ENCODE measurements at regions of chr12 and their contacts with region 1.

Region 1: DNA sequence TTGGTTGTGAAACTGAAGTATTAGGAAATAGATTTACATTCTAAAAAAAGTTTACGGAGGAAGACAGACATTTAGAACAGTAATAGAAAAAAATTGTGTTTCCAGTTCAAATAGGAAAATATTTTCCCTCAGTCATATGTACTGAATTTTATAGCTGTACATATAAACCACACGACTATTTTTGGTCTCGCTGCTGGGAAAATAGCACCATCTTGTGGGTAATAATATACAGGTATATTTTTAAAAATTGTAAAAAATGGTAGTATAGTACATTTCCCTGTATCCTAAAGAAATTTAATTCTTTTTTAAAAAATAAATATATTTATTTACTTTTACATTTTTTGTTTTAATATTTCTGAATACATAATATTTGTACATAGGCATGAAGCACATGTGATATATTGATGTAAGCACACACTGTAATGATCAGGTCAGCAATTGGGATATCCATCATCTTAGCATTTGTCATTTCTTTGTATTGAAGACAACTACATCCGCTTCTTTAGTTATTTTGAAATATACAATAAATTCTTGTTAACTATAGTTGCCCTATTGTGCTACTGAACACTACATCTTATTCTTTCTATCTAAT is 168.6 kb downstream of the ALX1 start:
- DNase-seq: peak; percentile 64
- H3K4me3 ChIP-seq: no peak overlapping the region
- H3K27ac ChIP-seq: no peak overlapping the region
- H3K4me1 ChIP-seq: peaks cover 25% of the 10 kb centered on the region
- H3K27me3 ChIP-seq: no peaks in the 10 kb centered on the region
- CTCF ChIP-seq: peak; percentile 69; the same call in 1 of the 2 replicates

Region 2: GRCh38 chr12:84874125-84874824 is 574.4 kb before region 1 on chr12:
- CTCF ChIA-PET with region 1: no interaction called
- POLR2A ChIA-PET with region 1: no interaction called
- intact Hi-C with region 1: loop called (anchors 10 kb)
- DNase-seq: peak; percentile 68
- H3K4me3 ChIP-seq: no peak overlapping the region
- H3K27ac ChIP-seq: no peak overlapping the region
- H3K4me1 ChIP-seq: no peaks in the 10 kb centered on the region
- H3K27me3 ChIP-seq: no peaks in the 10 kb centered on the region
- CTCF ChIP-seq: peak; percentile 80

Region 3: DNA sequence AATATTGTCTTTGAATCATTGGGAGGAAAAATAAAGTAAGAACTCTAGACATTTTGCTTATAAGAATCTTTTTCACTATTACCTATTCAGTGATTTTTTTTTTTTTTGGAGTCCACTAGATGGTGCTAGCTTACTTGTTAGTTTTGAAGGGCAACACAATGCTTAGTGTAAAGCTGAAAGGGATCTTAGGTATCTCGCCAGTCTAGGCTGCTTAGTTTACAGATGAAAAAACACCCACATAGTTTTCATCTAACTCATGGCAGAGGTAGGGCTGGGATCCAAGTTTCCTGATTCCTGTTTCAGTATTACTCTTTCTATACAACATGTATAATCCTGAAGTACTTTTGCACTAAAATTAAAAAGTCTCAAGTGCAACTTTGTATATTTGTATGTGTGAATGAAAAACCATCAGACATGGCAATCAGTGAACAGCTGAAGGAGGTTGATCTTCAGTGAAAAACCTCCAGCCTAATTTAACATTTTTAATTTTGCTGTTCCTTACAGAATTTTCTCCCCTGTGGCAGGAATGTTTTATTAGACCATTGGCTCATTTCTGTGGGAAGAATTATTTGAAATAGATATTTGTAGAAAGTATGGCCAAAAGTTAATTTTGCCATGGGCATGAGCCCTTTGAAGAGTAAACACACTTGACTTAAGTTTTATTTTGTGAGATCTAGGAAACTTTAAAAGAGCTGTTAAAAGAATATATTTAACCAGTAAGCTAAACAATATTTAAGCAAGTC is 371.8 kb before region 1 on chr12:
- CTCF ChIA-PET with region 1: interaction called, 7 read pairs
- POLR2A ChIA-PET with region 1: no interaction called
- intact Hi-C with region 1: loop called (anchors 1 kb)
- DNase-seq: peak; percentile 80
- H3K4me3 ChIP-seq: no peak overlapping the region
- H3K27ac ChIP-seq: no peak overlapping the region
- H3K4me1 ChIP-seq: no peaks in the 10 kb centered on the region
- H3K27me3 ChIP-seq: no peaks in the 10 kb centered on the region
- CTCF ChIP-seq: peak; percentile 68

Region 4: DNA sequence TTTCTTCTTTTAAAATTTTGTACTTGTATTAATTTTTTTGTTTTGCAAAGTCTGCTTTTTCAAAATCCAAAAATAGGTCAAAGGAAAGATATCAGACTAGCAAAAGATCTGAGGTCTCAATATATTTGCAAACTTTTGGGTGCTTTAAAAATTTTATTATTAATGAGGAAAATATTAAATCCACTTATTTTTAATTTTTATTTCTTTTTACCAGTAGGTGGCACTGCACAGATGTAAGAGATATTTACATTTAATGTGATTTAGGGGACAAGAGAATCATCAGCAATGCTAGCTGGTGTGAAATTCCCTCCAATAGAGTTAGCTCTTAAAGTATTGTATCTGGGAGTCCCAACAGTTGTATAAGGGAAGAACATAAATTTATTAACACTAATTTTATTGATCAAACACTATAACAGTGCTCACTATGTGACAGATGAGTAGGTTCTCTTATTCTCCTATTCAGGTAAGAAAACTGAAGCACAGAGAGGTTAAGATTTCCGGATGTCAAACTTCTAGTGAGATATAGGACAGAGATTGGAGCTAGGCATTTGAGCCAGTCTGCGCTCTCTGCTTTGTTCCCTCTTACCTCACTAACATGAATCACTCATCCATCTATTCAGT is 138.1 kb before region 1 on chr12:
- CTCF ChIA-PET with region 1: no interaction called
- POLR2A ChIA-PET with region 1: no interaction called
- intact Hi-C with region 1: loop called (anchors 5 kb)
- DNase-seq: peak; percentile 60
- H3K4me3 ChIP-seq: no peak overlapping the region
- H3K27ac ChIP-seq: peak overlapping the region; percentile 6
- H3K4me1 ChIP-seq: peaks cover 24% of the 10 kb centered on the region
- H3K27me3 ChIP-seq: no peaks in the 10 kb centered on the region
- CTCF ChIP-seq: peak; percentile 67

Region 5: GRCh38 chr12:85356596-85357385 is 91.9 kb before region 1 on chr12:
- CTCF ChIA-PET with region 1: no interaction called
- POLR2A ChIA-PET with region 1: no interaction called
- intact Hi-C with region 1: loop called (anchors 5 kb)
- DNase-seq: peak; percentile 89
- H3K4me3 ChIP-seq: no peak overlapping the region
- H3K27ac ChIP-seq: peak overlapping the region; percentile 81
- H3K4me1 ChIP-seq: peaks cover 74% of the 10 kb centered on the region
- H3K27me3 ChIP-seq: no peaks in the 10 kb centered on the region
- CTCF ChIP-seq: no peak

Region 6: GRCh38 chr12:85711735-85712390 is 263.2 kb after region 1 on chr12:
- CTCF ChIA-PET with region 1: no interaction called
- POLR2A ChIA-PET with region 1: no interaction called
- intact Hi-C with region 1: no loop called
- DNase-seq: no peak
- H3K4me3 ChIP-seq: no peak overlapping the region
- H3K27ac ChIP-seq: no peak overlapping the region
- H3K4me1 ChIP-seq: no peaks in the 10 kb centered on the region
- H3K27me3 ChIP-seq: no peaks in the 10 kb centered on the region
- CTCF ChIP-seq: no peak

Measured in A673 (cell line).